Vagina (tissue), 2 donors: ENCODE measurements at regions of chr13 and their contacts with region 1.

Region 1: DNA sequence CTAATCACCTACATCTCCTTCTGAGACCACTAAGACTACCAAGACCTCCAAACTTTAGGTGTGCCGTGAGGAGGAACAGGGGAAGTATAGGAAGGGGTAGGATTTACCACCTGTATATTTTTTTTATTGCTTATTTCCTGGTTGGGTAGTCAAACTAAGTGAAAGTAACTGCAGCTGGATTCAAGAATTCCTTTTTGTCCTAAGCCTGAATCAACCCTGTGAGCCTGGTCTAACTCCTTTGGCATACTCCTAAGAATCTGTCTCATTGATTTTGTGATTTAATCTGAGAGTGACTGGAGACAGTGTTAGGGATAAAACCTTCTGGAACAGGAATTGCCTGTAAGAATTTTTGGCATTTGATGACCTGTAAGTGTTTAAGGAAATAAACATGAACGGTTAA is 523.5 kb upstream of the MIR17HG start:
- DNase-seq: no peak
- H3K4me3 ChIP-seq: no peak overlapping the region
- H3K27ac ChIP-seq: no peak overlapping the region
- H3K4me1 ChIP-seq: no peaks in the 10 kb centered on the region
- H3K27me3 ChIP-seq: no peaks in the 10 kb centered on the region
- CTCF ChIP-seq: no peak
- POLR2A ChIP-seq: no peak

Region 2: GRCh38 chr13:90867336-90867683 is 43.3 kb after region 1 on chr13:
- intact Hi-C with region 1: loop called (anchors 1 kb)
- DNase-seq: no peak
- H3K4me3 ChIP-seq: no peak overlapping the region
- H3K27ac ChIP-seq: no peak overlapping the region
- H3K4me1 ChIP-seq: no peaks in the 10 kb centered on the region
- H3K27me3 ChIP-seq: no peaks in the 10 kb centered on the region
- CTCF ChIP-seq: no peak
- POLR2A ChIP-seq: no peak